ENCODE measurements at regions of chr20 and their contacts with region 1.

Region 1: DNA sequence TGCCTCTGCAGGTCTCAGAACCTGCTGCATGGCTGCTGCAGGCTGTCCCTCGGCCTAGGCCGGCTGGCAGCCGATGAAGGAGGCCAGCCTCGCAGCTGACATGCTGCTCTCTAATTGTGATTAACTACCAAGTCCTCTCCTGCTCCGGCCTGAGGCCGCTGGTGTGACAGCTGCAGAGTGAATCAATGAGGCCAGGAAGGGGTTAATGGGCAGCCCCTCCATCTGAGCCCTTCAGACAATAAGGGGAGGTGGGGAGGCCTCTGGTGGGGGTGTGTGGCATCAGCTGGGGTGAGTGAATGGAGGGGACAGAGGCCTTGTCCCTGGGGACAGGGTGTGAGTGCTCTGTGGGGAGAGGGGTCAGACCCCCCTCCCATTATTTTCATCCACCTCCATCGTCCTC is 34.4 kb downstream of the SLC52A3 start:
- DNase-seq: no peak
- ATAC-seq: no peak
- H3K4me3 ChIP-seq: no peak overlapping the region
- H3K27ac ChIP-seq: no peak overlapping the region
- H3K4me1 ChIP-seq: no peaks in the 10 kb centered on the region
- H3K27me3 ChIP-seq: peaks cover 17% of the 10 kb centered on the region
- CTCF ChIP-seq: no peak
- POLR2A ChIP-seq: no peak
- RAD21 ChIP-seq: no peak

Region 2: GRCh38 chr20:645318-646106 is 88.3 kb before region 1 on chr20:
- CTCF ChIA-PET with region 1: interaction called, 3 read pairs
- POLR2A ChIA-PET with region 1: no interaction called
- dilution Hi-C with region 1: no loop called
- in situ Hi-C with region 1: no loop called
- intact Hi-C with region 1: loop called (anchors 5 kb)
- DNase-seq: peak; percentile 57
- ATAC-seq: peak; percentile 87
- H3K4me3 ChIP-seq: no peak overlapping the region
- H3K27ac ChIP-seq: no peak overlapping the region
- H3K4me1 ChIP-seq: no peaks in the 10 kb centered on the region
- H3K27me3 ChIP-seq: no peaks in the 10 kb centered on the region; the same call in 1 of the 2 replicates
- CTCF ChIP-seq: peak; percentile 89
- POLR2A ChIP-seq: no peak
- RAD21 ChIP-seq: peak; percentile 77

Measured in IMR-90 (cell line).